Activated B cell treated with CpG ODN at 0.5 μM for 24 hours (primary cell): ENCODE measurements at regions of chr9 and their contacts with region 1.

Region 1: GRCh38 chr9:133375724-133376654 is at the starts of genes STKLD1 and SURF4:
- DNase-seq: peak; percentile 99
- ATAC-seq: peak; percentile 96
- H3K4me3 Mint-ChIP-seq: peak within 1 kb of the TSS; percentile 91
- H3K27ac Mint-ChIP-seq: peak within 1 kb of the TSS; percentile 74
- H3K4me1 Mint-ChIP-seq: peaks cover 39% of the 10 kb centered on the region
- H3K27me3 Mint-ChIP-seq: no peaks in the 10 kb centered on the region
- CTCF ChIP-seq: no peak
- total RNA-seq, gene STKLD1: 0.37 and 0.44 TPM in 2 replicates
- total RNA-seq, gene SURF4: 57.0 and 58.2 TPM in 2 replicates

Region 2: DNA sequence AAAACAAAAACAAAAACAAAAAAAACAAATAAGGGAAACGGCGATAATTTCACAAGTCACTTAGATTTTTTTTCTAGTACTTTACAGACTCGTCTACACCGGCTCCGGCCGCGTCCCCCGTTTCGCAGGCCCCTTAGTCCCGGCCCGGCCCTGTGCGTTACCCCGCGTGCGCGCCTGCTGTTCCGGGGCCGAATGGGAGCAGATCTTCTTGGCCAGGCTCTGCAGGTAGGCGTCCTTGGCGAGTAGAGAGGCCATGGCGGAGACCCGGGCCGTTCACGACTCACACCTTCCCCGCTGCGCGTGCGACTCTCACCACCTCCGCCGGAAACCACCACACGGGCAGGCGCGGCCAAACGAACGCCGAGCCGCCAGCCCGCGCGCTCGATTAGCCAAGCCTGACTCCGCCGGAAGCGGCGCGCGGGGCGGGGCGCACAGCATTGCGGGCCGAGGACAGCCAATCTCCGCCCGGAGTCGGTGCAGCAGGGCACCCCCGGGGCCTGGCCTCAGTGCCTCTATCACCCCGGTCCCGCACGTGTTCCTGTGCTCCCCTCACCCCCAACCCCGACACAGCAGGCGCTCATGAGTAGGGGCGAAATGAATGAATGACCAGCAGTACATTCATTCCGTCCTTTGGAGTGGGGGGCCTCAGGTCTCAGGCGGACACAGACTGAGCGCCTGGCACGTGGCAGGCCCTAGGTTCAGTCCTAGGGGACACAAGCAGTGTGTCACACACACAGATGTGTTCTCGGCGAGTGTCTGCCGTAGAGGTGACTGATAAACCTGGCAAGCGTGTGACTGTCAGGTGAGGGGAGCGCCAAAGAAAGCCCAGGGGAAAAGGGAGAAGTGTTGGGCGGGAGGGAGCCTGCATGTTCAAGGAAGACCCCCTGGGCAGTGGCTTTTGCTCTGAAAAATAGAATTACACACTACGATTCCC is 39.8 kb before region 1 on chr9 and contains the start of gene SURF6:
- CTCF ChIA-PET with region 1: no interaction called
- POLR2A ChIA-PET with region 1: interaction called, 5 read pairs
- intact Hi-C with region 1: loop called (anchors 1 kb)
- DNase-seq: peak; percentile 94
- ATAC-seq: peak; percentile 93
- H3K4me3 Mint-ChIP-seq: peak within 1 kb of the TSS; percentile 97
- H3K27ac Mint-ChIP-seq: peak within 1 kb of the TSS; percentile 92
- H3K4me1 Mint-ChIP-seq: peaks cover 57% of the 10 kb centered on the region
- H3K27me3 Mint-ChIP-seq: no peaks in the 10 kb centered on the region
- CTCF ChIP-seq: no peak
- total RNA-seq, gene SURF6: 22.4 and 23.9 TPM in 2 replicates

Region 3: DNA sequence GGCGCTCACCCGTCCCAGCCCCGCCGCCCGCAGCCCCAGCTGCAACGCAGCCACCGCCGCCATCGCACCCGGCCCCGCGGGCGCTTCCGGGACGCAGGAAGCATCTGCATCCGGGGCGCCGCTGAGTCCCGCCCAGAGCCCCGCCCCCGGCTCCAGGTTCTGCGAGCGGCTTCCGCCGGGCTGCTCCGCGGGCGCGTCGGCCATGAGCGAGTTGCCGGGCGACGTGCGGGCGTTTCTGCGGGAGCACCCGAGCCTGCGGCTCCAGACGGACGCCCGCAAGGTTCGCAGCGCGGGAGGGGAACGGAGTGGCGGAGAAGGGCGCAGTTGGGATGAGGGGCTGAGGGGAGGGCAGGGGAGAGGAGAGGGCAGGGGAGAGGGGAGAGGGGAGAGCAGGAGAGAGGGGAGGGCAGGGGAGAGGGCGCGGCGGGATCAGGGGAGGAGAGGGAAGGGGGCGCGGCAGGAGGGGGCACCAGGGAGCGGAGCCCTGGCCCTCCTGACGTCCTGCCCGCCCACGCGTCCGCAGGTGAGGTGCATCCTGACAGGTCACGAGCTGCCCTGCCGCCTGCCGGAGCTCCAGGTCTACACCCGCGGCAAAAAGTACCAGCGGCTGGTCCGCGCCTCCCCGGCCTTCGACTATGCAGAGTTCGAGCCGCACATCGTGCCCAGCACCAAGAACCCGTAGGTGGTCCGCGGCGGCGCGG is 19.4 kb before region 1 on chr9 and contains the starts of genes SURF1 and SURF2:
- CTCF ChIA-PET with region 1: no interaction called
- POLR2A ChIA-PET with region 1: interaction called, 26 read pairs
- intact Hi-C with region 1: loop called (anchors 1 kb)
- DNase-seq: peak; percentile 87
- ATAC-seq: peak; percentile 92
- H3K4me3 Mint-ChIP-seq: peak within 1 kb of the TSS; percentile 88
- H3K27ac Mint-ChIP-seq: peak within 1 kb of the TSS; percentile 82
- H3K4me1 Mint-ChIP-seq: peaks cover 43% of the 10 kb centered on the region
- H3K27me3 Mint-ChIP-seq: no peaks in the 10 kb centered on the region
- CTCF ChIP-seq: no peak
- total RNA-seq, gene SURF1: 33.6 and 38.9 TPM in 2 replicates
- total RNA-seq, gene SURF2: 17.3 and 17.8 TPM in 2 replicates

Region 4: GRCh38 chr9:133478851-133479711 is 103.1 kb after region 1 on chr9 and contains the start of gene SLC2A6:
- CTCF ChIA-PET with region 1: no interaction called
- POLR2A ChIA-PET with region 1: interaction called, 5 read pairs
- intact Hi-C with region 1: loop called (anchors 1 kb)
- DNase-seq: peak; percentile 85
- ATAC-seq: peak; percentile 93
- H3K4me3 Mint-ChIP-seq: peak within 1 kb of the TSS; percentile 90
- H3K27ac Mint-ChIP-seq: peak within 1 kb of the TSS; percentile 90
- H3K4me1 Mint-ChIP-seq: peaks cover 29% of the 10 kb centered on the region
- H3K27me3 Mint-ChIP-seq: no peaks in the 10 kb centered on the region
- CTCF ChIP-seq: no peak
- total RNA-seq, gene SLC2A6: 32.9 and 37.4 TPM in 2 replicates

Region 5: DNA sequence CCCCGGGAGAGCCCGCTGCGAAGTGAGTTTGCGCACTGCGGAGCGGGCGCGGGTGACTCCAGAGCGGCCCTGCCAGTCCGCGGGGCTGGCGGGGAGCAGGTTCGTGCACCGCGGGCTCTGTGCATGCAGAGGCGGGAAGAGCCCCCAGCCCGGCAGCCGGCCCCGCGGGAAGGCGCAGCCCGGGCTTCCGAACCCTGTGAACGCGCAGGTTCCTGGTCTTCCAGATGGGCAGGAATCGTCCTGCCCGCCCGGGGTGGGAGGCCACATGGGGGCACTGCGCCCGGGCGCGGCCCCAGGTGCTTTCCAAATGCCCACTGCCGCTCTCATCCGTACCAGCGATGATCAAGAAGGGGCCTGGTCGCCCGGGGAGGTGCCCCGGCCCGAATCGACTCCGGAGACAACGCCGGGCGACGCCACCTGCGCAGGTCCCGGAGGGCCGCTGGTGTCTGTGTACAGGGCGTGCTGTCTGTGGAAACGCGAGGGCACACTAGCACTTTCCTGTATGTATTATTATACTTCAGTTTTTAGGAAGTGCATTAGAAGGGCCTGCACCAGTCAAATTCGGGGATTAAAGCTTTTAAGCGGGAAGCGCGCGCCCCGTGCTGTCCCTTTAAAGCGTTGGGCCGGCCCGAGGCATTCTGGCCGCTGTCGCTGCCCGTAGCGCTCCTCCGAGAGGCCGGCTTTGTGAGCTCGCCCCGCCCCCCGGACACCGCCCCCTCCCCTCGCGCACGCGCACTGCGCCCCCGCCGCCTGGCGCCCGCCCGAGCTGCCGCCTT is 759.5 kb after region 1 on chr9 and contains the start of gene WDR5:
- CTCF ChIA-PET with region 1: no interaction called
- POLR2A ChIA-PET with region 1: no interaction called
- intact Hi-C with region 1: loop called (anchors 10 kb)
- DNase-seq: peak; percentile 89
- ATAC-seq: peak; percentile 87
- H3K4me3 Mint-ChIP-seq: peak within 1 kb of the TSS; percentile 89
- H3K27ac Mint-ChIP-seq: peak within 1 kb of the TSS; percentile 90
- H3K4me1 Mint-ChIP-seq: peaks cover 35% of the 10 kb centered on the region
- H3K27me3 Mint-ChIP-seq: no peaks in the 10 kb centered on the region
- CTCF ChIP-seq: no peak
- total RNA-seq, gene WDR5: 20.8 and 22.4 TPM in 2 replicates